Endothelial cell of umbilical vein (primary cell): ENCODE measurements at regions of chr4 and their contacts with region 1.

Region 1: DNA sequence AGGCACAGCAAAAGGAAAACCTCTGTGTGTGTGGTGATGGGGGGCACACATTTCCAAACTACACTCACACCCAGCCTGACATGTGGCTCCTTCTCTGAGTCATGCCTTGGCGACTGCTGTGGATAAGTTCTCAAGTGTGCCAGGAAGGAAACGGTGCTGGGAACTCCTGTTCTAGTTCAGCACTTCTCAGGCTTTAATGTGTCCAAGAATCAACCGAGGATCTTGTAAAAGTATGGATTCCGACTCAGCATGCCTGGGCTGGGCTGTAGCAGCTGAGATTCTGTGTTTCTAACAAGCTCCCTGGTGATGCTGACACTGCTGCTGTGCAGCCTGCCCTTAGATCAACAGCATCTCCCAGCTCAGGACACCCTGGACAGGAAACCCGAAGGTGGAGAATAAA is 20.2 kb downstream of the CLNK start:
- DNase-seq: peak; percentile 92
- H3K4me3 ChIP-seq: no peak overlapping the region
- H3K27ac ChIP-seq: peak overlapping the region; percentile 14
- H3K4me1 ChIP-seq: peaks cover 15% of the 10 kb centered on the region
- H3K27me3 ChIP-seq: peaks cover 5 to 10% of the 10 kb centered on the region in 2 experiments
- CTCF ChIP-seq: no peak
- POLR2A ChIP-seq: no peak

Region 2: DNA sequence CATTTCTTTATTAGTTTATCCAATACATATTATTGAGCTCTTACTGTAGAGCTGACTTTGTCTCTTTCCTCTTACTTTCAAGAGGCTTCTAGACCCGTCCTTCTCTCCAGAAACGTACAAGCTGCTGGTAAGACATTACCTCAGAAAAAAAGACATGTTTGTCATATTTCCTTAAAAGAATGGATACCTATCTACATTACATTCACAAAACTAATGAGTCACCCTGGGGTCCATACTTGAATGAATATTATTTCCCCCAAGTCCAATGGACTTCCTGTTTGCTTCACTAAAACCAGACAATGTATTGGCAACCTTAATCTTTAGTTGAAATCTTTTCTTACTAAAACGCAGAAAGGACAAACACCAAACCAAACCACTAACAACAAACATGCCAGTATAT is 196.6 kb after region 1 on chr4:
- CTCF ChIA-PET with region 1: no interaction called
- POLR2A ChIA-PET with region 1: no interaction called
- dilution Hi-C with region 1: no loop called
- intact Hi-C with region 1: loop called (anchors 1 kb)
- DNase-seq: no peak
- H3K4me3 ChIP-seq: no peak overlapping the region
- H3K27ac ChIP-seq: no peak overlapping the region
- H3K4me1 ChIP-seq: no peaks in the 10 kb centered on the region
- H3K27me3 ChIP-seq: no peaks in the 10 kb centered on the region
- CTCF ChIP-seq: no peak
- POLR2A ChIP-seq: no peak